ENCODE measurements at regions of chr14 and their contacts with region 1.

Region 1: DNA sequence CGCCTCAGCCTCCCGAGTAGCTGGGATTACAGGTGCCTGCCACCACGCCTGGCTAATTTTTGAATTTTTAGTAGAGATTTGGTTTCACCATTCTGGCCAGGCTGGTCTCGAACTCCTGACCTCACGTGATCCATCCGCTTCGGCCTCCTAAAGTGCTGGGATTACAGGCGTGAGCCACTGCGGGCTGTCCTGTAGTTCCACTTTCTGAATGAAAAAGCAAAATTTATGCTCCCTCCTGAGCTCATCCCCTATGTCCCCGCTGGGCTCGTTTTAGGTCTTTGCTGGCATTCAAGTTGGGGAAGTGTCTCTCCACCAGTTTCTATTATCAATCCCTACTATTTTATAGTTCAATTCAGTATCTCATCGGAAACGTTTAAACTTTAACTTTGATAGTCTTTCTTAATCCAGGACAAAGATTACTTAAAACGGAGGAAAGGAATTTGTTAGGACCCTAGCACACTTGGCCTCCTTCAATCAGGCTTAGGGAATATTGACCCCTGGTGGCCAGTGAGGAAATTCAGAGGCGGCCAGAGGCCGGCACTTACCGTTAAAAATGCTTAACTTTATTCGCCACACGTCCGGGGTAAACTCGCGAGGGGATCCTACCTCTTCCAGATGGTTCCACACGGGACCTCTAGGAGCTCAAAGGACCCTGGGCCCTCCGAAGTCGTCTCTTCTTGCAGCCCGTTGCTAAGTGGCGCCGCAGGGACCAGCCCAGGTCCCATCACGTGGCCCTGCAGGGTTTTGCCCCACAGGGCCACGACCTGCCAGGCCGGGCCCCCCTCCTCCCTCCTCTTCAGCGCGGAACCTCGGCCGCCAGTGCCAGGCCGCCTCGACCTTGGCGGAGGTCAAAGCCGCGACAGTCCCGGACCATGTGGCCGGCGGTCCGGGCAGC is 11.4 kb upstream of the DNAL1 start:
- DNase-seq: peak; percentile 59 to 61
- H3K4me3 ChIP-seq: peak overlapping the region; percentile 58
- H3K27ac ChIP-seq: no peak overlapping the region
- H3K4me1 ChIP-seq: peaks cover 13% of the 10 kb centered on the region
- H3K27me3 ChIP-seq: no peaks in the 10 kb centered on the region
- CTCF ChIP-seq: peak; percentile 93

Region 2: GRCh38 chr14:73295198-73295796 is 338.1 kb before region 1 on chr14:
- CTCF ChIA-PET with region 1: no interaction called
- POLR2A ChIA-PET with region 1: no interaction called
- intact Hi-C with region 1: loop called (anchors 1 kb)
- DNase-seq: peak in 1 of 2 experiments; percentile 6
- H3K4me3 ChIP-seq: no peak overlapping the region
- H3K27ac ChIP-seq: no peak overlapping the region
- H3K4me1 ChIP-seq: no peaks in the 10 kb centered on the region
- H3K27me3 ChIP-seq: no peaks in the 10 kb centered on the region
- CTCF ChIP-seq: peak; percentile 81

Region 3: GRCh38 chr14:73472185-73473114 is 160.9 kb before region 1 on chr14:
- CTCF ChIA-PET with region 1: no interaction called
- POLR2A ChIA-PET with region 1: no interaction called
- intact Hi-C with region 1: loop called (anchors 2 kb)
- DNase-seq: peak in 1 of 2 experiments; percentile 51
- H3K4me3 ChIP-seq: no peak overlapping the region
- H3K27ac ChIP-seq: no peak overlapping the region
- H3K4me1 ChIP-seq: no peaks in the 10 kb centered on the region
- H3K27me3 ChIP-seq: no peaks in the 10 kb centered on the region
- CTCF ChIP-seq: peak; percentile 77

Region 4: GRCh38 chr14:73503648-73504047 is 129.7 kb before region 1 on chr14:
- CTCF ChIA-PET with region 1: interaction called, 5 read pairs
- POLR2A ChIA-PET with region 1: no interaction called
- intact Hi-C with region 1: loop called (anchors 1 kb)
- DNase-seq: no peak
- H3K4me3 ChIP-seq: no peak overlapping the region
- H3K27ac ChIP-seq: no peak overlapping the region
- H3K4me1 ChIP-seq: no peaks in the 10 kb centered on the region
- H3K27me3 ChIP-seq: no peaks in the 10 kb centered on the region
- CTCF ChIP-seq: no peak

Region 5: GRCh38 chr14:73599499-73599898 is 33.9 kb before region 1 on chr14:
- CTCF ChIA-PET with region 1: no interaction called
- POLR2A ChIA-PET with region 1: no interaction called
- intact Hi-C with region 1: loop called (anchors 1 kb)
- DNase-seq: no peak
- H3K4me3 ChIP-seq: no peak overlapping the region
- H3K27ac ChIP-seq: no peak overlapping the region
- H3K4me1 ChIP-seq: peaks cover 32% of the 10 kb centered on the region
- H3K27me3 ChIP-seq: no peaks in the 10 kb centered on the region
- CTCF ChIP-seq: no peak

Region 6: DNA sequence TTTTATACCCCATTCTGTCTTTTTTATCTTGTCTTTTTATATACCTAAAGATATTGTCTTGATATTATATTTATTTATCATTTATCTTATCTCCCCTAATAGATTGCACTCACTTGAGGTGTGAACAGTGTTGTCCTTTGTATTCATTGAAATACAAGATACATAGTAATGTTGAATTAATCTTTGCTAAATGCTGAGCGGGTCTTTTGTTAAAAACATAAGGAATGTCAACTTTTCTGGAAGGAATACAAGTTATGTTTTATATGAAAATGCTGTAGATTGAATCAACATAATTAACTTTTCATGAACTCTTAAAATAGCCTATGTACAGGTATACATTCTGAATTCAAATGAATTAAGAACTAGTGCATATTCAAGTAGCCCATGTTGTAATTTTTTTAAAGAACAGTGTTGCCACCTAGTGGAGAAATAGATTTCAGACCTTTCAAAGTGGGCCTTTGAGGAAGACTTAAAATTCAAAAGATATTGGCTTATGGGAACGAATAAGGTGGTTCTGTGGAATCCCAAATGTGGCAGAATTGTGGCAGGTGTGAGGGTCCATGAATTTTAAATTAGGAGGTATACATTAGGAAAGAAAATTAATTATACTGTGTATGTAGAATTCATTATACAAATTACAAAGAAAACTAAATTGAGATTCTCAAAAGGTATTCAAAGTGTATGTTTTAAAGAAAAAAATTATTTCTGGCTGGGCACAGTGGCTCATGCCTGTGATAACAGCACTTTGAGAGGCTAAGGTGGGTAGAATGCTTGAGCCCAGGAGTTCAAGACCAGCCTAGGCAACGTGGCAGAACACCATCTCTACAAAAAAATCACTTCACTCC is 404.9 kb after region 1 on chr14:
- CTCF ChIA-PET with region 1: no interaction called
- POLR2A ChIA-PET with region 1: no interaction called
- intact Hi-C with region 1: loop called (anchors 1 kb)
- DNase-seq: peak in 1 of 2 experiments; percentile 66
- H3K4me3 ChIP-seq: no peak overlapping the region
- H3K27ac ChIP-seq: no peak overlapping the region
- H3K4me1 ChIP-seq: no peaks in the 10 kb centered on the region
- H3K27me3 ChIP-seq: no peaks in the 10 kb centered on the region
- CTCF ChIP-seq: peak; percentile 96

Measured in PC-9 (cell line).